T-cell (primary cell): ENCODE measurements at regions of chr17 and their contacts with region 1.

Region 1: DNA sequence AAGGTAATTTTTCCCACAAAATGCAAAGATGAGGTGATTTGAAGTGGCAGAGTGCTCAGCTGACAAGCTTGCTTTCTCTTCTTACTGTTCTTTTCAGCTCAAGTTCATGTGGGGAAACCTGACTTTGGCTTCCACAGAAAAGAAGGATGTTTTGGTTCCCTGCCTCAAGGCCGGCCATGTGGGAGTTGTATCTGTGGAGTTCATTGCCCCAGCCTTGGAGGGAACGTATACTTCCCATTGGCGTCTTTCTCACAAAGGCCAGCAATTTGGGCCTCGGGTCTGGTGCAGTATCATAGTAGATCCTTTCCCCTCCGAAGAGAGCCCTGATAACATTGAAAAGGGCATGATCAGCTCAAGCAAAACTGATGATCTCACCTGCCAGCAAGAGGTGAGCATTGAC is 18.4 kb upstream of the TMEM106A start:
- DNase-seq: no peak
- ATAC-seq: no peak
- H3K4me3 ChIP-seq: no peak overlapping the region
- H3K4me3 Mint-ChIP-seq: no peak overlapping the region
- H3K27ac ChIP-seq: no peak overlapping the region
- H3K27ac Mint-ChIP-seq: no peak overlapping the region
- H3K4me1 ChIP-seq: no peaks in the 10 kb centered on the region
- H3K4me1 Mint-ChIP-seq: peaks cover 0 to 2% (median 0%) of the 10 kb centered on the region in 3 donors
- H3K27me3 ChIP-seq: no peaks in the 10 kb centered on the region
- H3K27me3 Mint-ChIP-seq: no peaks in the 10 kb centered on the region

Region 2: GRCh38 chr17:41486809-41487720 is 1706.2 kb before region 1 on chr17:
- CTCF ChIA-PET with region 1: no interaction called
- POLR2A ChIA-PET with region 1: no interaction called
- DNase-seq: peak in 11 of 35 experiments; percentile 6 to 27 (median 14)
- ATAC-seq: no peak
- H3K4me3 ChIP-seq: no peak overlapping the region
- H3K4me3 Mint-ChIP-seq: no peak overlapping the region
- H3K27ac ChIP-seq: no peak overlapping the region
- H3K27ac Mint-ChIP-seq: no peak overlapping the region
- H3K4me1 ChIP-seq: peaks cover 0 to 5% of the 10 kb centered on the region in 2 experiments
- H3K4me1 Mint-ChIP-seq: peaks cover 9 to 12% (median 10%) of the 10 kb centered on the region in 3 donors
- H3K27me3 ChIP-seq: peaks cover 0 to 33% of the 10 kb centered on the region in 2 experiments
- H3K27me3 Mint-ChIP-seq: no peaks in the 10 kb centered on the region

Region 3: DNA sequence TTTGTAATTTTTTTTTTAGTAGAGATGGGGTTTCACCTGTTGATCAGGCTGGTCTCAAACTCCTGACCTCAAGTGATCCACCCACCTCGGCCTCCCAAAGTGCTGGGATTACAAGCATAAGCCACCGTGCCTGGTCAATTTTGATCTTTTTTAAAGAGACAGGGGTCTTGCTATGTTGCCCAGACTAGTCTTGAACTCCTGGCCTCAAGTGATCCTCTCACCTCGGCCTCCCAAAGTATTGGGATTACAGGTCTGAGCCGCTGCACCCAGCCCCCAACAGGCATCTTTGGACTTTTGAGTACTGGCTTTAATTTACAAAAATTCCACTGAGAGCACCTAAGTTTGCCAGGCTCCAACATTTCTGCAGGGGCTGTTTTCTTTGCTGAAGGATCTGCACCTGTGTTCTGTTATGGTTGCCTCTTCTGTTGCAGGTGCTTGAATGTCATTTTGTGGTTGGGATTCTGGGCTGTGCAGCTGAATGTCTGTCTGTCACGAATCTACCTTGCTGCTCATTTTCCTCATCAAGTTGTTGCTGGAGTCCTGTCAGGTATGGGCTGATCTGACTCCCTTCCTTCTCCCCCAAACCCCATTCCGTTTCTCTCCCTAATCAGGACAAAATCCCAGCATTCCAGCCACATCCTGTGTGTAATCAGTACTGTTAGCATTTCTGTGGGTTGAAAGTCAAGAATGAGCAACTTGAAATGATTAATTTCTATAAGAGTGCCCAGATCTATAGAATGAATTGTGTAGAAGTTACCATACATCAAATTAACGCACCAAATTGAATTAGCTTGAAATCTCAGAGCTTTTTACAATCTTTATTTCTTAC is 284.2 kb before region 1 on chr17:
- CTCF ChIA-PET with region 1: no interaction called
- POLR2A ChIA-PET with region 1: interaction called in 1 of 2 experiments, 10 read pairs
- DNase-seq: no peak
- ATAC-seq: no peak
- H3K4me3 ChIP-seq: no peak overlapping the region
- H3K4me3 Mint-ChIP-seq: no peak overlapping the region
- H3K27ac ChIP-seq: no peak overlapping the region
- H3K27ac Mint-ChIP-seq: no peak overlapping the region
- H3K4me1 ChIP-seq: no peaks in the 10 kb centered on the region
- H3K4me1 Mint-ChIP-seq: no peaks in the 10 kb centered on the region
- H3K27me3 ChIP-seq: peaks cover 0 to 23% of the 10 kb centered on the region in 2 experiments
- H3K27me3 Mint-ChIP-seq: peaks cover 12 to 20% of the 10 kb centered on the region in 2 donors

Region 4: DNA sequence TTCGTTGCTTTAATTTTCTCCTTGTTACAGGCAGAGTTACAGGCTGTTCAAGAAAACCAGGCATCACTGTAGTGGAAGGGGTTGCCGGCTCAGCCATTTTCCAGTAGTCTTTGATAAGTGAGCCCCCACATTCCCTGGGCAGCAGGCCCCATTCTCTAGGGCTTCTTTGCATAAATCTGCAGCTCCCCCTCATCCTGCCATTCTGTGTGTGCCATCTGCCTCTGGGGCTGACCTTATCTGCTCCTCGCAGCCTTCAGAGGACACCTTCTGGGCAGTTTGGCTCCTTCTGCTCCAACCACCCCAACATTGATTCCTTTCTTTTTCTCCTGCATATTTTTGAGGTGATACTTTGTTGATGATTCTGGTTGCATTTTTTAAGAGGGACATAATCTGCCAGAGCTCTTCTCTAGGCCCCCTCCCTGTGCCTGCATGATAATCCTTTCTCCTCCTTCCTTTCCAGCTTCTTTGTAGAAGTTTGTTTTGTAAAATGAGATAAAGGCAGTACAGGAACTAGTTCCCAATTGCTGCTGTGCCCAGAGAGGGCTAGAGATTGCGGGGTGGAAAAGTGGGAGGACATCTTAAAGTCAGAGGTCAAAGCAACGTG is 151.1 kb before region 1 on chr17:
- CTCF ChIA-PET with region 1: no interaction called
- POLR2A ChIA-PET with region 1: interaction called in 1 of 2 experiments, 11 read pairs
- DNase-seq: no peak
- ATAC-seq: no peak
- H3K4me3 ChIP-seq: no peak overlapping the region
- H3K4me3 Mint-ChIP-seq: no peak overlapping the region
- H3K27ac ChIP-seq: no peak overlapping the region
- H3K27ac Mint-ChIP-seq: no peak overlapping the region
- H3K4me1 ChIP-seq: no peaks in the 10 kb centered on the region
- H3K4me1 Mint-ChIP-seq: no peaks in the 10 kb centered on the region
- H3K27me3 ChIP-seq: no peaks in the 10 kb centered on the region
- H3K27me3 Mint-ChIP-seq: no peaks in the 10 kb centered on the region